Pancreas (tissue), 10 donors: ENCODE measurements at regions of chr3 and their contacts with region 1.

Region 1: GRCh38 chr3:9302425-9303181 is 53.2 kb upstream of the SRGAP3 start:
- DNase-seq: peak; percentile 58 to 92 (median 76)
- ATAC-seq: peak; percentile 94 to 100 (median 98)
- H3K4me3 ChIP-seq: no peak overlapping the region
- H3K27ac ChIP-seq: no peak overlapping the region
- H3K4me1 ChIP-seq: no peaks in the 10 kb centered on the region
- H3K27me3 ChIP-seq: no peaks in the 10 kb centered on the region
- CTCF ChIP-seq: peak; percentile 80 to 84 (median 84)

Region 2: GRCh38 chr3:8964436-8965370 is 337.9 kb before region 1 on chr3:
- intact Hi-C with region 1: loop called in 1 of 3 experiments (anchors 5 kb)
- DNase-seq: no peak
- ATAC-seq: peak in 1 of 4 donors; percentile 35
- H3K4me3 ChIP-seq: no peak overlapping the region
- H3K27ac ChIP-seq: peak overlapping the region in 2 of 4 donors; percentile 13 to 16
- H3K4me1 ChIP-seq: peaks cover 0 to 7% (median 0%) of the 10 kb centered on the region in 3 donors
- H3K27me3 ChIP-seq: no peaks in the 10 kb centered on the region
- CTCF ChIP-seq: no peak

Region 3: GRCh38 chr3:8970971-8971589 is 331.5 kb before region 1 on chr3:
- intact Hi-C with region 1: loop called in 2 of 3 experiments (anchors 5 kb)
- DNase-seq: peak in 5 of 6 donors; percentile 30 to 74 (median 41)
- ATAC-seq: peak; percentile 71 to 95 (median 92)
- H3K4me3 ChIP-seq: no peak overlapping the region
- H3K27ac ChIP-seq: no peak overlapping the region
- H3K4me1 ChIP-seq: no peaks in the 10 kb centered on the region
- H3K27me3 ChIP-seq: no peaks in the 10 kb centered on the region
- CTCF ChIP-seq: peak; percentile 85 to 97 (median 89)

Region 4: GRCh38 chr3:8987645-8988383 is 314.8 kb before region 1 on chr3:
- intact Hi-C with region 1: loop called in 1 of 3 experiments (anchors 5 kb)
- DNase-seq: peak in 5 of 6 donors; percentile 14 to 79 (median 57)
- ATAC-seq: peak; percentile 46 to 93 (median 89)
- H3K4me3 ChIP-seq: no peak overlapping the region
- H3K27ac ChIP-seq: no peak overlapping the region
- H3K4me1 ChIP-seq: no peaks in the 10 kb centered on the region
- H3K27me3 ChIP-seq: no peaks in the 10 kb centered on the region
- CTCF ChIP-seq: peak; percentile 42 to 69 (median 62)